Activated CD4-positive, alpha-beta T cell treated with anti-CD3 and anti-CD28 coated beads for 36 hours (primary cell): ENCODE measurements at regions of chr11 and their contacts with region 1.

Region 1: GRCh38 chr11:65919146-65920033 is at the start of gene DRAP1:
- DNase-seq: peak; percentile 100
- ATAC-seq: peak; percentile 94
- H3K4me3 Mint-ChIP-seq: peak within 1 kb of the TSS; percentile 91
- H3K27ac Mint-ChIP-seq: peak within 1 kb of the TSS; percentile 88
- H3K4me1 Mint-ChIP-seq: peaks cover 35% of the 10 kb centered on the region
- H3K27me3 Mint-ChIP-seq: no peaks in the 10 kb centered on the region
- total RNA-seq, gene DRAP1: 111 to 158 TPM

Region 2: GRCh38 chr11:65546217-65546958 is 373.0 kb before region 1 on chr11:
- CTCF ChIA-PET with region 1: no interaction called
- POLR2A ChIA-PET with region 1: no interaction called
- intact Hi-C with region 1: loop called in 1 of 2 experiments (anchors 1 kb)
- DNase-seq: peak; percentile 99
- ATAC-seq: peak; percentile 85
- H3K4me3 Mint-ChIP-seq: peak overlapping the region; percentile 72
- H3K27ac Mint-ChIP-seq: peak overlapping the region; percentile 87
- H3K4me1 Mint-ChIP-seq: peaks cover 46% of the 10 kb centered on the region
- H3K27me3 Mint-ChIP-seq: no peaks in the 10 kb centered on the region

Region 3: GRCh38 chr11:65662799-65663638 is 256.4 kb before region 1 on chr11 and contains the start of gene RELA:
- CTCF ChIA-PET with region 1: no interaction called
- POLR2A ChIA-PET with region 1: no interaction called
- intact Hi-C with region 1: loop called in 1 of 2 experiments (anchors 1 kb)
- DNase-seq: peak; percentile 96
- ATAC-seq: peak; percentile 90
- H3K4me3 Mint-ChIP-seq: peak within 1 kb of the TSS; percentile 88
- H3K27ac Mint-ChIP-seq: peak within 1 kb of the TSS; percentile 97
- H3K4me1 Mint-ChIP-seq: peaks cover 41% of the 10 kb centered on the region
- H3K27me3 Mint-ChIP-seq: no peaks in the 10 kb centered on the region
- total RNA-seq, gene RELA: 76.9 to 109 TPM

Region 4: DNA sequence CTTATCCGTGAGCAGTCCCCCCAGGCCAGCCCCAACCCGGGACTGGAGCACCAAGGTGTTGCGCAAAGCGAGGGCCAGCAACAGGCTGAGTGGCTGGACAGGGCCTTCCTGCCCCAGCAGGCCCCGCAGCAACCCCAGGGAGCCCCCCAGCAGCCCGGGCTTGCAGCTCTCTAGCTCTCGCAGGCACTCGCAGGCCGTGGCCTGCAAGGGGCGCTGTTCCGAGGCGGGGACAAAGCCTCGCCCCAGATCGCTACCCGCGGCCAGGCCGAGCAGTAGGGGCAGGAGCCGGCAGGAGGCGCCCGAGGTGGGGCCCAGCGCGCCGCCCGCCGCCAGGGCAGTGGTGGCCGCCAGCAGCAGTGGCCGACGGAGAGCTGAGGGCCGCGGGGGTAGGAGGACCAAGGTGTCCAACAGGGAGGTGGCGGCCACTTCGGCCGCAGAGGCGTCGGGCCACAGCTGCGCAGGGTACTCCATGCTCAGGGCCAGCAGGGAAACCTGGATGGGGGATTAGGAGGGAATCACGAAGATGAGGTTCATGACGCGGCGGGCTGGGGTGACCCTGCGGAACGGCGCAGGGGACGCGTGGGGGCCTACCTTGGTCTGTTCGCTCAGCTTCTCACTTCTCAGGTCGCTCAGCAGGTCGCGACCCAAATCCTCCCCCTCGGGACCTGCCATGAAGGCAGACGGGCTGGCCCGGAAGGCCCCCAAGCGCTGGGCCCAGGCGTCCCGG is 139.4 kb before region 1 on chr11:
- CTCF ChIA-PET with region 1: no interaction called
- POLR2A ChIA-PET with region 1: no interaction called
- intact Hi-C with region 1: loop called in 1 of 2 experiments (anchors 1 kb)
- DNase-seq: peak; percentile 94
- ATAC-seq: peak; percentile 81
- H3K4me3 Mint-ChIP-seq: peak overlapping the region; percentile 87
- H3K27ac Mint-ChIP-seq: peak overlapping the region; percentile 83
- H3K4me1 Mint-ChIP-seq: peaks cover 27% of the 10 kb centered on the region
- H3K27me3 Mint-ChIP-seq: peaks cover 10% of the 10 kb centered on the region

Region 5: DNA sequence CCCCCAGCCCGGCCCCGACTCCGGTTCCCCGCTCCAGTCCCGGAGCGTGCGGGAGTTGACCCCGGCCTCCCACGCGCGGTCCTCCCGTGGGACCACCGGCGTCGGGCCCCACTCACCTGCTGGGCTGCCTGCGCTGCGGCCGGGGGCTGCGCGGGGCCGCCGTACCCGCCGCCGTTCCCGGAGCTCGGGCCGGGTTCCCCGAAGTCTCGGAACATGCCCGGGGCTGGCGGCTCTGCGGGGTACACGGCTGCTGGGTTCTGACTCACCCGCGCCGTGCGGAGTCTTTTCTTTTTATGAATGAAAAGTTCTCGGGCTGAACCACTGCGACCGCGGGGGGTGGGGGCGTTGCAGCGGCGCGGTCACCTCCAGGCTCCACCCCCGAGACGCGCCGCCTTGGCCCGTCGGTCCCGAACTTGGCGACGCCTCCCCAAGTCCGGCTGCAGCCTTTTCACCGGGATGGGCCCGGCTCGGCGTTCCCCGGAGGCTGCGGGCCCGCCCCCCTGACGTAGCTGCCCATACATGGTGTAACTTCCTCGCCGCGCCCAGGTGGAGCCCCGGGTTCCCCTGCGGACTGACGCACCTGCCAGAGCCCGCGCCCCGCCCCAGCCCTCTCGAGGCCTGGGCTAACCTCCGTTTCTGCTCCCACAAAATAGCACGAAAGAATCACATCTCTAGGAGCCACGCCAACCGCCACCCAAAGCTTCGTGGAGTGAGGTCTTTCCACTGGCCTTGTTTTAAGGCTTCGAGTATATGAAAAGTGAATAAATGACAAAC is 19.1 kb before region 1 on chr11 and contains the start of gene FOSL1:
- CTCF ChIA-PET with region 1: interaction called, 3 read pairs
- POLR2A ChIA-PET with region 1: interaction called, 3 read pairs
- intact Hi-C with region 1: loop called (anchors 1 kb)
- DNase-seq: peak; percentile 98
- ATAC-seq: peak; percentile 85
- H3K4me3 Mint-ChIP-seq: peak within 1 kb of the TSS; percentile 75
- H3K27ac Mint-ChIP-seq: peak within 1 kb of the TSS; percentile 78
- H3K4me1 Mint-ChIP-seq: peaks cover 35% of the 10 kb centered on the region
- H3K27me3 Mint-ChIP-seq: peaks cover 4% of the 10 kb centered on the region
- total RNA-seq, gene FOSL1: 11.1 to 11.3 TPM

Region 6: GRCh38 chr11:66268283-66268951 is 349.0 kb after region 1 on chr11 and contains the start of gene RAB1B:
- CTCF ChIA-PET with region 1: no interaction called
- POLR2A ChIA-PET with region 1: no interaction called
- intact Hi-C with region 1: loop called in 1 of 2 experiments (anchors 1 kb)
- DNase-seq: peak; percentile 100
- ATAC-seq: peak; percentile 88
- H3K4me3 Mint-ChIP-seq: peak within 1 kb of the TSS; percentile 100
- H3K27ac Mint-ChIP-seq: peak within 1 kb of the TSS; percentile 97
- H3K4me1 Mint-ChIP-seq: peaks cover 28% of the 10 kb centered on the region
- H3K27me3 Mint-ChIP-seq: no peaks in the 10 kb centered on the region
- total RNA-seq, gene RAB1B: 114 to 147 TPM